ENCODE measurements at regions of chr11 and their contacts with region 1.

Region 1: DNA sequence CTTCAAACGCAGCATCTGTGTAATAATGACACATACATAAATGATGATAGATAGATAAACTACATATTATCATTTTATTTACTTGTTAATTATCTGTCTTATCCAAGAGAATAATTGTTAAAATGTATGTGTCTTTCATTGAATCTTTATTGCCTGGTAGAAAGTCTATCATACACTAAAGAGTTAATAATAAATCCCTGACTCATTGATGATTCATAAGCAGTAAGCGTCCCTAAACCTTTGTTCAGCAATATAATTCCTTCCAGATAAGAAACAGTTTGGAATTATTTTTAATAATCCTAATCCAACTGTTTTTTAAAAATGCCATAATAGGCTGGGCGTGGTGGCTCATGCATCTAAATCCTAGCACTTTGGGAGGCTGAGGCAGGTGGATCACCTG is 655.6 kb upstream of the CNTN5 start:
- DNase-seq: no peak
- H3K4me3 ChIP-seq: no peak overlapping the region
- H3K4me3 Mint-ChIP-seq: no peak overlapping the region
- H3K27ac ChIP-seq: no peak overlapping the region
- H3K27ac Mint-ChIP-seq: no peak overlapping the region
- H3K4me1 ChIP-seq: no peaks in the 10 kb centered on the region
- H3K4me1 Mint-ChIP-seq: no peaks in the 10 kb centered on the region
- H3K27me3 ChIP-seq: no peaks in the 10 kb centered on the region
- H3K27me3 Mint-ChIP-seq: peaks cover 0 to 1% (median 0%) of the 10 kb centered on the region in 3 donors
- CTCF ChIP-seq: no peak

Region 2: DNA sequence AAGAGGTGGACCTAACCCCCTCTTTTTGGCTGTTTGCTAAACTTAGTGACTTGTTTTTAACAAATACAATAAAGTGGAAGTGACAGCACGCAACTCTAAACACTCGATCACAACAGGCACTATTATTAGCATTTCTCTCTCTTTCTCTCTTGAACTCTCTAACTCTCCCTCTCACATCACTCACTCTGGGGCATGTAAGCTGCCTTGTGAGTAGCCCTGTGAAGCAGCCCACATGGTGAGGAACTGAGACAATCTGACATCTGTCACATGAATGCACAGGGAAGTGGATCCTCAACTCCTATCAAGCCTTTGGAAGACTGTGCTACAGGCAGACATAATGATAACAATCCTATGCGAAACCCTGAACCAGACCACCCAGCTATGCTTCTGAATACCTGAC is 46.6 kb after region 1 on chr11:
- intact Hi-C with region 1: loop called in 1 of 2 experiments (anchors 10 kb)
- DNase-seq: no peak
- H3K4me3 ChIP-seq: no peak overlapping the region
- H3K4me3 Mint-ChIP-seq: no peak overlapping the region
- H3K27ac ChIP-seq: no peak overlapping the region
- H3K27ac Mint-ChIP-seq: no peak overlapping the region
- H3K4me1 ChIP-seq: no peaks in the 10 kb centered on the region
- H3K4me1 Mint-ChIP-seq: no peaks in the 10 kb centered on the region
- H3K27me3 ChIP-seq: no peaks in the 10 kb centered on the region
- H3K27me3 Mint-ChIP-seq: no peaks in the 10 kb centered on the region
- CTCF ChIP-seq: no peak